CD14-positive monocyte (primary cell): ENCODE measurements at regions of chr17 and their contacts with region 1.

Region 1: GRCh38 chr17:48892940-48893645 is 506 bp downstream of the ATP5MC1 start:
- DNase-seq: peak in 1 of 3 donors; percentile 39
- H3K4me3 ChIP-seq: peak overlapping the region; percentile 68 to 82 (median 71)
- H3K4me3 Mint-ChIP-seq: peak overlapping the region; percentile 94 to 100
- H3K27ac ChIP-seq: peak overlapping the region; percentile 50 to 85
- H3K27ac Mint-ChIP-seq: peak overlapping the region; percentile 93 to 99 (median 95)
- H3K4me1 ChIP-seq: peaks cover 17 to 25% of the 10 kb centered on the region in 2 donors
- H3K4me1 Mint-ChIP-seq: peaks cover 20% of the 10 kb centered on the region
- H3K27me3 ChIP-seq: no peaks in the 10 kb centered on the region
- H3K27me3 Mint-ChIP-seq: peaks cover 0 to 4% (median 2%) of the 10 kb centered on the region in 3 donors
- CTCF ChIP-seq: no peak

Region 2: DNA sequence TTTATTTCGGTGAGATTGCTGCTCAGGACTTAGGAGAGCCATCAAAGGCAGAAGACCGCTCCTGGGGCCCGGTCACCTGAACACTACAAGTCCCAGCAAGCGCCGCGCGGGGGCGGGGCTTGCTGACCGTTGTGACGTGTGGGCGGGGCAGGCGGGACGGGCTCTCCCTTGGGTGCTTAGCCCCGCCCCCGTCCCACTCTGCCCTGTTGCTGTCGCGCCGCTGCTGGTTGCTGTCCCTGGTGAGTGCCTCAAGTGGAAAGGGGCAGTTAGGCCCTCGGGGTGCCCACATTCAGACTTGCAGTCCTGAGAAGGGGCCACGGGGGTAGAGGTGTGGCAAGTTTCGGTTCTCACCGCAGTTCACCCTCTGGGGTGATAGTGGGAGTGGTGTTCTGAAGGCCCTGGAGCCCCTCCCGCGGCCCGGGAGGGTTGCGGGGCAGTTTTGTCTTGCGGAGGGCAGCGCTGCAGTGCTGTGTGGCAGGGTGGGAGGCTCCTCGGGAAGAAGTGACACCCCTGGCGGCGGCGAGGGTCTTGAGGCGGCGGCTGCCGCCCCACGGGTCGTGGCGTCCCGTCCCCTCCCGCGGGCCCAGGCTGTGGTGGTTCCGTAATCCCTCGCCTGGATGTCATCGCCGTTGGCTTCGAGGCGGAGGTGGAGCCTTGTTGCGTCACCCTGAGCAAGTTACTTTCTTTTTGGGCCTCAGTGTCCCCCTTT is 62.1 kb before region 1 on chr17 and contains the start of gene CALCOCO2:
- intact Hi-C with region 1: loop called in 1 of 2 experiments (anchors 5 kb)
- DNase-seq: peak; percentile 94 to 95 (median 95)
- H3K4me3 ChIP-seq: peak within 1 kb of the TSS; percentile 72 to 92 (median 92)
- H3K4me3 Mint-ChIP-seq: peak within 1 kb of the TSS; percentile 94 to 98
- H3K27ac ChIP-seq: peak within 1 kb of the TSS; percentile 96 to 98
- H3K27ac Mint-ChIP-seq: peak within 1 kb of the TSS; percentile 99 to 100 (median 100)
- H3K4me1 ChIP-seq: peaks cover 15 to 18% of the 10 kb centered on the region in 2 donors
- H3K4me1 Mint-ChIP-seq: peaks cover 28% of the 10 kb centered on the region
- H3K27me3 ChIP-seq: peaks cover 3 to 4% of the 10 kb centered on the region in 2 donors
- H3K27me3 Mint-ChIP-seq: peaks cover 8 to 33% (median 18%) of the 10 kb centered on the region in 3 donors
- CTCF ChIP-seq: no peak
- polyA plus RNA-seq, gene CALCOCO2: 87.5 to 280 (median 214) TPM

Region 3: DNA sequence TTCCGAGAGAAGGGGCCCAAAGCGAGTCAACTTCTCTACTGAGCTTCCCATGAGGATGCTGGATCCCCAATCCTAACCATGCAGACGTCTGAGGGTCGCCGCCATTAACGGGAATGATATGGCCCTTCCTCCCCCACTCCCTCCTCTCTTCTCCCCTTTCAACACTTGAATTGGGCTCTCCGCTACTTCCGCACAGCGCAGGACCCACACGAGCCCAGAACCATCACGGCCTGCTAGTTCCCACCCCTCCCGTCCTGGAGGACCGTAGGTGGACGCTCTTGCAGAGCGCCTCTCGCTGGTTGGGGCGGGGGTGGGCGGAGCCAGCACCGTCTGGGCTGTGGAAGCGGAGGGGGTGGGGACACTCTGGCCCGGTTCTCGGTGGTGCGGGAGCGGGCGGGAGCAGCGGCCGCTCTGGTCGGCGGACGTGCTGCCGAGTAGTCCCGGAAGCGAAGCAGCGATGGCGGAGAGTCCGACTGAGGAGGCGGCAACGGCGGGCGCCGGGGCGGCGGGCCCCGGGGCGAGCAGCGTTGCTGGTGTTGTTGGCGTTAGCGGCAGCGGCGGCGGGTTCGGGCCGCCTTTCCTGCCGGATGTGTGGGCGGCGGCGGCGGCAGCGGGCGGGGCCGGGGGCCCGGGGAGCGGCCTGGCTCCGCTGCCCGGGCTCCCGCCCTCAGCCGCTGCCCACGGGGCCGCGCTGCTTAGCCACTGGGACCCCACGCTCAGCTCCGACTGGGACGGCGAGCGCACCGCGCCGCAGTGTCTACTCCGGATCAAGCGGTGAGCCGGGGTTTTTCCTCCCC is 15.2 kb after region 1 on chr17 and contains the start of gene UBE2Z:
- intact Hi-C with region 1: loop called in 1 of 2 experiments (anchors 2 kb)
- DNase-seq: peak; percentile 87 to 93 (median 88)
- H3K4me3 ChIP-seq: peak within 1 kb of the TSS; percentile 37 to 82 (median 68)
- H3K4me3 Mint-ChIP-seq: peak within 1 kb of the TSS; percentile 93 to 98
- H3K27ac ChIP-seq: peak within 1 kb of the TSS; percentile 93 to 98
- H3K27ac Mint-ChIP-seq: peak within 1 kb of the TSS; percentile 96 to 100 (median 98)
- H3K4me1 ChIP-seq: peaks cover 25 to 37% of the 10 kb centered on the region in 2 donors
- H3K4me1 Mint-ChIP-seq: peaks cover 35% of the 10 kb centered on the region
- H3K27me3 ChIP-seq: no peaks in the 10 kb centered on the region
- H3K27me3 Mint-ChIP-seq: peaks cover 0 to 3% (median 0%) of the 10 kb centered on the region in 3 donors
- CTCF ChIP-seq: no peak
- polyA plus RNA-seq, gene UBE2Z: 35.8 to 44.7 (median 40.0) TPM

Region 4: DNA sequence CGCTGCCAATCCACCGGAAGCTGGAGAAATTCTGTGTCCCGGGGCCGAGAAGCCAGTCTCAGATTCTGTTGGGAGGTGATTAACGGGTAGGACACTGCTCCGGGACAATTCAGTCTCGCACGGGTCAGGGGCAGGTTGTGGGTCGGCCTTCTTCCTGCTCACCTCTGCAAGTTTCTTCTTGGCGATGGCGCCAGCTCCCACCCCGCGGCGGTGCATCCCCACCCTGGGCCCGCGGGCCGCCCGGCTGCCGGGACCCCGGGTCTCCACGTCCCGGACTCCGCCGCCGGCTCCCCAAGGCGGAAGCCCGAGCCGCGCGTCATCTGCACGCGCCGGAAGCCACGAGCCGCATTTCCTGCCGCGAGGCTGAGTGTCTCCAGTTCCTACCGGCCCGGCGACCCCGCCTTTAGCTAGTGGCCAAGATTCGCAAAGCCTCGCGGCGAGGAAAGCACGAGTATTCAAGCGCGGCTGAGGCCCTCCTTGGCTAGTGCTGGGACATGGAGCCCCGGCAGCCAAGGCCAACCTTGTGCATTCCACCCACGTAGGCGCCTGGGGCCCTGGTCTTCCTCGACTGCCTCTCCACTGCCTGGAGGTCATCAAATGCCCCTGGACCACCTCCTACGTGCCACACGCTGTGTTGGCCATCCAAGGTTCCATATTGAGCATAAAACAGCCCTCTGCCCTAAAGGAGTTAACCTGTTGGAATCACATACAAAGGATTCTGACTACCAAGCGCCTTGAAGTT is 51.6 kb after region 1 on chr17 and contains the start of gene SNF8:
- intact Hi-C with region 1: loop called in 1 of 2 experiments (anchors 1 kb)
- DNase-seq: peak; percentile 86 to 89 (median 87)
- H3K4me3 ChIP-seq: peak within 1 kb of the TSS; percentile 83 to 97 (median 95)
- H3K4me3 Mint-ChIP-seq: peak within 1 kb of the TSS; percentile 97 to 99
- H3K27ac ChIP-seq: peak within 1 kb of the TSS; percentile 76 to 97
- H3K27ac Mint-ChIP-seq: peak within 1 kb of the TSS; percentile 88 to 99 (median 94)
- H3K4me1 ChIP-seq: peaks cover 13 to 27% of the 10 kb centered on the region in 2 donors
- H3K4me1 Mint-ChIP-seq: peaks cover 21% of the 10 kb centered on the region
- H3K27me3 ChIP-seq: peaks cover 0 to 5% of the 10 kb centered on the region in 2 donors
- H3K27me3 Mint-ChIP-seq: peaks cover 11 to 25% (median 12%) of the 10 kb centered on the region in 3 donors
- CTCF ChIP-seq: no peak
- polyA plus RNA-seq, gene SNF8: 91.6 to 162 (median 145) TPM

Region 5: DNA sequence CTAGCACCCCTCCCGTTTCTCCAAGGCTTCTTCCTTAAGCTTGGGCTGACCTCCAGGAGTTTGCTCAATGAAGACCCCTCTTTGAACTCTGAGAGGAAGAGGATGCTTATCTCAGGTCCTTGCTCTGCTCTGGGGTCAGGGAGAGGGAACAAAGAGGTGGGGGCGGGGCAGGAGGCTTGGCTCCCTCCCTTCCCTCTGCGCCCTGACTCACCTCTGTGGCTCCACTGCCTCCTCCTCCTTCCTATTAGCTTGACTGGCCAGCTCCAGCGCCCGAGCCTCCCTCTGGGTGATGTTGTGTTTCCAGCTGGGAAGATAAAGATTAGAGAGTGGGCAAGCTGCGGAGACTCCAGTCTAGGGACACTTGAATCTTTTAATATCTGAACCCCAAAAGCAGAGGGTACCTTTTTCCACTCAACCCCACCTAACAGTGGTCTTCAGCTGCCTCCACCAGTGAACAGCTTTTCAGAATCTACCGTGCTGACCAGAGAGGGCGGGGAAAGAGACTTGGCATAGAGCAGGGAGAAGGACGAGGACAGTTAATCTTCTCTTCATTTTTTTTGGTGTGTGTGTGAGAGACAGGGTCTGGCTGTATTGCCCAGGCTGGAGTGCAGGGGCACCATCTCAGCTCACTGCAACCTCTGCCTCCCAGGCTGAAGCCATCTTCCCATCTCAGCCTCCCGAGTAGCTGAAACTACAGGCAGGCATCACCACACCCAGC is 68.6 kb after region 1 on chr17:
- intact Hi-C with region 1: no loop called
- DNase-seq: no peak
- H3K4me3 ChIP-seq: no peak overlapping the region
- H3K4me3 Mint-ChIP-seq: peak overlapping the region in 1 of 2 donors; percentile 40
- H3K27ac ChIP-seq: no peak overlapping the region
- H3K27ac Mint-ChIP-seq: no peak overlapping the region
- H3K4me1 ChIP-seq: no peaks in the 10 kb centered on the region
- H3K4me1 Mint-ChIP-seq: no peaks in the 10 kb centered on the region
- H3K27me3 ChIP-seq: peaks cover 0 to 23% of the 10 kb centered on the region in 2 donors
- H3K27me3 Mint-ChIP-seq: peaks cover 26 to 58% (median 48%) of the 10 kb centered on the region in 3 donors
- CTCF ChIP-seq: no peak